Activated T-helper 1 cell treated with anti-CD3 and anti-CD28 coated beads, Interleukin-12 subunit alpha, Interleukin-12 subunit beta, Interleukin-2, Interleukin-4 antibody, amounts not matched to agents 30 ng/mL and 10 ng/mL and 1 ng/mL, durations not matched to agents 14 hours and 24 hours and 36 hours (primary cell): ENCODE measurements at regions of chr2 and their contacts with region 1.

Region 1: GRCh38 chr2:134169788-134170187 is 84.1 kb upstream of the MGAT5 start:
- DNase-seq: no peak
- H3K4me3 Mint-ChIP-seq: no peak overlapping the region
- H3K27ac Mint-ChIP-seq: peak overlapping the region; percentile 47
- H3K4me1 Mint-ChIP-seq: peaks cover 17% of the 10 kb centered on the region
- H3K27me3 Mint-ChIP-seq: no peaks in the 10 kb centered on the region

Region 2: GRCh38 chr2:133791191-133791590 is 378.6 kb before region 1 on chr2:
- intact Hi-C with region 1: no loop called
- DNase-seq: no peak
- H3K4me3 Mint-ChIP-seq: no peak overlapping the region
- H3K27ac Mint-ChIP-seq: no peak overlapping the region
- H3K4me1 Mint-ChIP-seq: no peaks in the 10 kb centered on the region
- H3K27me3 Mint-ChIP-seq: no peaks in the 10 kb centered on the region

Region 3: DNA sequence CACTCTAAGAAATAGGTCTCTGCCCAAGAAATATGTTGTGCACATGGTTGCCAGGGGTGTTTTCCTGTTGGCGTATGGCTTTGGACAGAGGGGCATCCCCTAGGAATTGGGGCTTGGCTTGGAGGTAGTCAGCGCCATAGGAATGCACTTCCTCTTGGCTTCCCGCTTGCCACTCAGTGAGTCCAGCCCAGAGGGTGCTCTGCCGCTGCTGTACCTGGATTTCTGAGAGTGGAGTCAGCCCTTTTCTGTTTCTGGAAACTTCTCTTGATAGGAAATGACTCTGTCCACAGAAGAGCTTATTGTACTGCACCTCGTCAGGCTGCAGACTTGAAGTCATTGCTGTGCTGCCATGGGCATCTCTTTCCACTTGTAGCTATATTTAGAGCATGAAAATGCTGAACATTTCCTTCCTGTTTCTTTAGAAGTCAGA is 32.6 kb before region 1 on chr2:
- intact Hi-C with region 1: loop called (anchors 1 kb)
- DNase-seq: no peak
- H3K4me3 Mint-ChIP-seq: no peak overlapping the region
- H3K27ac Mint-ChIP-seq: peak overlapping the region; percentile 54
- H3K4me1 Mint-ChIP-seq: peaks cover 27% of the 10 kb centered on the region
- H3K27me3 Mint-ChIP-seq: peaks cover 2% of the 10 kb centered on the region

Region 4: DNA sequence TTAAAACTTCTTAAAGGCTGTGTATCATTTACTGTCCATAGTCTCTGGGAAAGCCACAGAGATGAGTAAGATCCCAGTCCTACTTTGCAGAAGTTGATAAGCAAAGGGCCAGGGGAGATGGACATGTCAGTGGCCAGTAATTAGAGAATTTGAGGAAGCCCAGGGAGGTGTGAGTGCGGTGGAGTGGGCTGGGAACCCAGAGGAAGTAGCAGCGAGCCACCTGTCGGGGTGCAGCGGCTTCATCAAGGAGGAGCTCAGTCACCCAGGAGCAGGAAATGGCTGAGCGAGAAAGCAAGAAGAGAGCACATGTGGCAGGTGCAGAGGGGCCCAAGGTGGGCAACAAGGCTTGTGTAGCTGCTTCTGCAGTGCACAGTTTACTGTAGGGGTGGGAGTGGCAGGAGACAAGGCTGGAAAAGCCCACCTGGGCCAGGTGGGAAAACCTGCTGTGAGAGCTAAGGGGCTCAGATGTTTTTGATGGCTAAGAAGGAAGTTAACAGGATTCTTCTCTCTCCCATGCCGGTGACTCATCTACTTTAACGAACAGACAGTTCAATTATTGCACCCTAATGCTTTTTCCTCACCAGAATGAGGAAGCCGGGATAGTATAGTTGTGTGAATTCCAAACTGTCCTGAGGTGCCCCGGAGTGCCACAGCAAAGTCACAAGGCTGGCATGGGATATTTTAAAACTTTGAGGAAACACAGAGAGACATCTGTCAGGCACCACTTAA is 49.3 kb after region 1 on chr2:
- intact Hi-C with region 1: loop called (anchors 1 kb)
- DNase-seq: peak; percentile 11
- H3K4me3 Mint-ChIP-seq: no peak overlapping the region
- H3K27ac Mint-ChIP-seq: peak overlapping the region; percentile 75
- H3K4me1 Mint-ChIP-seq: peaks cover 40% of the 10 kb centered on the region
- H3K27me3 Mint-ChIP-seq: peaks cover 9% of the 10 kb centered on the region